ENCODE measurements at regions of chr18 and their contacts with region 1.

Region 1: DNA sequence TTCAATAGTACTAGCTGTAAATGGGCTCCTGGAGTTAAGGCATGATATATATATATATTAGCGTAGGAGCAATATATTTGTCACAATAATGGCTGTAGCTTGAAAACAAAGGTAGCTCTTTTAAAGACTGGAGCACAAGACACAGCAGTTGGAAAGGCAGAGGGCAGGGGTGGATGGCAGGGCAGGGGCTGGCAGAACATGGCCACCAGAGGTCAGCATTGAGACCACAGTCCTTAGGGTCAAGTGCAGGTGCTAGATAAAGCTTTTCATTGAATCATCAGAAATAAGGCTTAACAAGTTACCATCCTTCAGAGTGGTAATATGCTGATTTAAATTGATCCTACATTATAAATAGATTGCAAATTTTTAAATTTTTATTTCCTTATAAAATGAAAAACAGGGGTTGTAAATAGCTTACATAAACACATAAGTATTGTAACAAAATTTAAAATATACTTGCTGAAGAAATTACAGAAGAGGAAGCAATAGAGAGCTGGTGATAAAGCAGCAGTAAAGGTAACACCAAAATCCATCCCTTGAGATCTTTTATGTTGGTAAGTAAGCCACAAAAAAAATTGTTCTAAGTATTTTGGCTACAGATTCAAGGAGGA is 161.2 kb upstream of the PIEZO2 start:
- DNase-seq: peak; percentile 13 to 52
- ATAC-seq: peak; percentile 84 to 86; a peak in 4 of 6 replicates
- H3K4me3 ChIP-seq: no peak overlapping the region
- H3K27ac ChIP-seq: no peak overlapping the region
- H3K4me1 ChIP-seq: no peaks in the 10 kb centered on the region
- CTCF ChIP-seq: peak; percentile 69
- EP300 ChIP-seq: no peak
- POLR2A ChIP-seq: no peak
- RAD21 ChIP-seq: peak; percentile 61 to 66

Region 2: DNA sequence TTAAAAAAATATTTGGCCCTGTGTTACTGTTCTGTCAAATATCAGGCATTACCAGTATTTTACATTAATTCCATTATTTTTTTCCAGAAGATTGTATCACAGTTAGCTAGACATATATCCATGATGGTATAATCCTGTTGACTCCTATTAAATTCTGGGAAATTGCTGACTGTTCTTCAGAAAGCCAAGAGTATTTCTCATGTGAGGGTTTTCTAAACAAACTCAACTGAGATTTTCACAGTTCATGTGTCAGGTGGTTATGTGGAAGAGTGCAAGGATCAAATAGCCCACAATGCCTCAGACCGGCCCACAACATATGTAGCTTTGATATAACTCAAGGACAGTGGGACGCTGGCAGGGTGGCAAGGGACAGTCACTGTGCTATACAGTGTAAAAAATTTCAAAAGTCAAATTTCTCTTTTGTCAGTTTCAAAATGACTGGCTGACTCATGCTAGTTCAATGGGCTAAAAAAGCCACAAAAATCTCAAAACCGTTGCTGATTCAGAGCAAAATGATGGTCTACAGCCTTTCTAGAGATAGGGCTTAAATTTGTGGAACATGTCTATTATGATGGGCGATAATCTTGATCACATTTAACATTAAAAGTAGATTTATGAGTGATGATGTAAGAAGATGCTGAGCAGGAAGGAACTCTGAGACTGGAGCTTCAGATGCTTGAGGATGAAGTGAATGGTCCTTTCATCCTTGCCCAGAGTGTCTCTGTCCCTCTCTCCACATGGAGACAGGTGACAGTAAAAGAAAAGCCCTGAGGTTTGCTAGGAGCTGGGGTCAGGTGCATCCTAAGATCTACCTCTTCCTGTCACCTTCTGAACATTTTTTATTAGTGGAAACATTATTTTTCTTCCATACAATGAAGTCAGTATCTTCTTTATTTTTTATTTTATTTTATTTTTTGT is 14.6 kb after region 1 on chr18:
- CTCF ChIA-PET with region 1: interaction called, 32 read pairs
- POLR2A ChIA-PET with region 1: no interaction called
- DNase-seq: no peak
- ATAC-seq: peak in 1 of 2 experiments; percentile 43; a peak in 2 of 6 replicates
- H3K4me3 ChIP-seq: no peak overlapping the region
- H3K27ac ChIP-seq: peak overlapping the region in 1 of 2 experiments; percentile 72; a peak in 3 of 6 replicates
- H3K4me1 ChIP-seq: peaks cover 31% of the 10 kb centered on the region
- CTCF ChIP-seq: no peak
- EP300 ChIP-seq: no peak
- POLR2A ChIP-seq: no peak
- RAD21 ChIP-seq: no peak

Region 3: DNA sequence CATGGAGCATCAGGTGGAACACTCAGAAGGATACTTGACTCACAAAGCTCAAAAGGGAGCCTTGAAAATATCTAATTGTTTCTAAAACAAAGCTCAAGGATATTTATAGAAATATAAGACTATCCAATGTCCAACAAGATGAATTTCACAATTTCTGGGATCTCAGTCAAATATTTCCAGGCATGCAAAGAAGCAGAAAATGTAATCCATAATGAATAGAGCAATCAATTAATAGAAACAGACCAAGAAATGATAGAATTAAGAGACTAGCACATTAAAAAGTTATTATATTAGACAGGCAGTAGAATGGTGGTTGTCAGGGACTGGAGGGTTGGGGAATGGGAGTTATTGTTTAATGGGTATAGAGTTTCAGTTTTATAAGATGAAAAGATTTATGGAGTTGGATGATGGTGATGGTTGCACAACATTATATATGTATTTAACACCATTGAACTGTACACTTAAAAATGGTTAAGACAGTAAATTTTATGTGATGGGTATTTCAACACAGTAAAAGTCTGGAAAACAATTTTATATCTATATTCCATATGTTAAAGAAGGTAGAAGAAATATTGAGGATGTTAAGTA is 28.7 kb after region 1 on chr18:
- CTCF ChIA-PET with region 1: interaction called, 10 read pairs
- POLR2A ChIA-PET with region 1: no interaction called
- DNase-seq: no peak
- ATAC-seq: no peak
- H3K4me3 ChIP-seq: no peak overlapping the region
- H3K27ac ChIP-seq: no peak overlapping the region
- H3K4me1 ChIP-seq: no peaks in the 10 kb centered on the region
- CTCF ChIP-seq: no peak
- EP300 ChIP-seq: no peak
- POLR2A ChIP-seq: no peak
- RAD21 ChIP-seq: no peak

Region 4: GRCh38 chr18:11500153-11501122 is 189.9 kb after region 1 on chr18:
- CTCF ChIA-PET with region 1: interaction called, 26 read pairs
- POLR2A ChIA-PET with region 1: no interaction called
- DNase-seq: peak; percentile 77 to 90
- ATAC-seq: peak; percentile 98 to 99
- H3K4me3 ChIP-seq: no peak overlapping the region
- H3K27ac ChIP-seq: peak overlapping the region; percentile 71 to 90
- H3K4me1 ChIP-seq: peaks cover 49% of the 10 kb centered on the region
- CTCF ChIP-seq: no peak
- EP300 ChIP-seq: peak in 1 of 2 experiments; percentile 67; a peak in 1 of 5 replicates
- POLR2A ChIP-seq: no peak
- RAD21 ChIP-seq: no peak

Region 5: GRCh38 chr18:11512096-11513030 is 201.8 kb after region 1 on chr18:
- CTCF ChIA-PET with region 1: interaction called, 102 read pairs
- POLR2A ChIA-PET with region 1: no interaction called
- DNase-seq: peak; percentile 11 to 49
- ATAC-seq: peak; percentile 69 to 80; a peak in 4 of 6 replicates
- H3K4me3 ChIP-seq: no peak overlapping the region
- H3K27ac ChIP-seq: no peak overlapping the region
- H3K4me1 ChIP-seq: peaks cover 5% of the 10 kb centered on the region; the same call in 1 of the 3 replicates
- CTCF ChIP-seq: peak; percentile 60
- EP300 ChIP-seq: no peak
- POLR2A ChIP-seq: no peak
- RAD21 ChIP-seq: peak; percentile 78 to 81

Region 6: DNA sequence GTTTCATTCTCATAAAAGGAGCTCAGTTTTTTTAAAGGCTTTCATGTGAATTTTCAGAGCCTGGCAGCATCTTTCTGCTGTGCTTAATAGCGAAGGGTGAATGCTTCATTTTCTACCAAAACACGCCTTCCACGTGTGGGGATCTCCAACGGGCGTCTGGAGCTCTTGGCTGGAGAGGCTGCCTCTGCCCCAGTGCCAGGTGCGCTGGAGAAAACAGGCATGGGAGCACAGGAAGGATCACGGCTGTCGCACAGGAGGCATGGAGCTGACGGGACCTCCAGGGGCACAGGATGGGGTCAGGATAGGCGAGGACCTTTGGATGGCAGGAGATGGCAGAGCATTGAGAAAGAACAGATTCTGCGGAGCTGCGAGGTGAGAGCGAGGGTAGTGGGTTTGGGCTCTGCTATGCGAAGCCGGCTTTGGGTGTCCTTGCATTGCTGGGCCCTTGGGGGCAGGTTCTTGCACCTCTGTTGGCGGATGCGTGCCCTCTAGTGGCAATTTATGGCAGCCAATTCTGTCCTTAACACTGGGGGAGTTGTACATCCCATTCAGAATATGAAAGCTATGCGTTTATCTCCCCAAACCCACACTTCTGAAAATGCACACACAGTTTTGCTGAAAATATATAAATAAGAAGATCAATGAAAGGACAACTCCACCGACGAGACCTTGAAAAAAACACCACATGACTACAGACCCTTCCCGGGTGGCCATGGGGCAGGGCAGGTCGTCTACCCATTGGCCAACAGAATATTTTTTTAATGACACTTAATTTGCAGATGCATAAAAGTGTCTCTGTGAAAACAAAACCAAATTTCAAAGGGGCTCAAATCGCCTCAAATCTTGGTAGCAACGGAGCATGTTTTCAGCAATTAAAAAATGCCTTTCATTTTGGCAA is 208.5 kb after region 1 on chr18:
- CTCF ChIA-PET with region 1: interaction called, 102 read pairs
- POLR2A ChIA-PET with region 1: no interaction called
- DNase-seq: peak; percentile 50 to 62
- ATAC-seq: peak; percentile 82 to 93
- H3K4me3 ChIP-seq: no peak overlapping the region
- H3K27ac ChIP-seq: no peak overlapping the region
- H3K4me1 ChIP-seq: peaks cover 4% of the 10 kb centered on the region; the same call in 1 of the 3 replicates
- CTCF ChIP-seq: peak; percentile 55
- EP300 ChIP-seq: no peak
- POLR2A ChIP-seq: no peak
- RAD21 ChIP-seq: peak; percentile 54 to 59

Region 7: DNA sequence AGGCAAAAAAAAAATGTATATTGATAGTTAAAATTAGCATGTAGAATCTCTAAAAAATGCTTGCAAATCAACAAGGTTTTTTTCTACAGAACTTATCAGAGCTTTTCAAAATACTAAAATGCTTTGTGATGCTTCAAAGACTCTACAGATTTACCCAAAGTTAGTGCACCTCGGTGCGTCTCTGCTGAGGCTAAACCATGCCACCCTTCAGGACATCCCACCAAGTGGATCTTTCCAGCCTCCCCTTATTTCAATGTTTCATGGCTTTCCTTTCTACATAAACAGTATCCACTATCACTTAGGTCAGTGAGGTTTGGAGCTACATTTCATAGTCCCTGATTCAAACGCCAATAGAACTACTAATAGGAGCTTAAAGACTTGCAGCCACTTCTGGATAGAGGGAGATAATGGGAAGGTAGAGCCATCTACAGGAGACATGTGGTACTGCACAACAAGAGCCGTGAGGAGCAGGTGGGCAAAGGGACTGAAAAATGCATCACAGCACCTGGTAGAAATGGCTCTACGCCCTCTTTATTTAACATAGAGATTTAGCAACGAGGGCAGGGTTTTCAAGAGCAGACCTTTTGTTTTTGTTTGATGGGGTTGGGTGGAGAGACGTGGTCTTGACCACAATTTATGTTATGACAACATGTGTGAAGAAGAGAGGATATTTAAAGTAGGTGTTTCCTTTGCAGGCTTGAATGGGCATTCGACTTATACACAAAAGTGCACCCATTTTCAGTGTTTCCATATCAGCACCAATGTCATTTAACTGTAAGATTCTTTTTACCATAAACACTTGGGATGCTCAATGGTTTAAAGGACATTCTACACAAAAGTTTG is 242.7 kb after region 1 on chr18:
- CTCF ChIA-PET with region 1: interaction called, 33 read pairs
- POLR2A ChIA-PET with region 1: no interaction called
- DNase-seq: peak; percentile 35 to 52
- ATAC-seq: peak; percentile 71 to 81; a peak in 5 of 6 replicates
- H3K4me3 ChIP-seq: no peak overlapping the region
- H3K27ac ChIP-seq: no peak overlapping the region
- H3K4me1 ChIP-seq: no peaks in the 10 kb centered on the region
- CTCF ChIP-seq: peak; percentile 62
- EP300 ChIP-seq: no peak
- POLR2A ChIP-seq: no peak
- RAD21 ChIP-seq: peak; percentile 73 to 77

Measured in A549 (cell line).